MCF 10A (cell line): ENCODE measurements at regions of chr9 and their contacts with region 1.

Region 1: GRCh38 chr9:97710356-97711222 is 13.4 kb upstream of the XPA start:
- DNase-seq: peak; percentile 75
- H3K4me3 Mint-ChIP-seq: no peak overlapping the region
- H3K27ac Mint-ChIP-seq: no peak overlapping the region
- H3K4me1 Mint-ChIP-seq: peaks cover 24% of the 10 kb centered on the region
- H3K27me3 Mint-ChIP-seq: no peaks in the 10 kb centered on the region
- CTCF ChIP-seq: peak; percentile 82

Region 2: GRCh38 chr9:97575673-97576200 is 134.9 kb before region 1 on chr9:
- CTCF ChIA-PET with region 1: no interaction called
- POLR2A ChIA-PET with region 1: no interaction called
- intact Hi-C with region 1: no loop called
- DNase-seq: no peak
- H3K4me3 Mint-ChIP-seq: no peak overlapping the region
- H3K27ac Mint-ChIP-seq: no peak overlapping the region
- H3K4me1 Mint-ChIP-seq: no peaks in the 10 kb centered on the region
- H3K27me3 Mint-ChIP-seq: peaks cover 13% of the 10 kb centered on the region
- CTCF ChIP-seq: no peak

Region 3: DNA sequence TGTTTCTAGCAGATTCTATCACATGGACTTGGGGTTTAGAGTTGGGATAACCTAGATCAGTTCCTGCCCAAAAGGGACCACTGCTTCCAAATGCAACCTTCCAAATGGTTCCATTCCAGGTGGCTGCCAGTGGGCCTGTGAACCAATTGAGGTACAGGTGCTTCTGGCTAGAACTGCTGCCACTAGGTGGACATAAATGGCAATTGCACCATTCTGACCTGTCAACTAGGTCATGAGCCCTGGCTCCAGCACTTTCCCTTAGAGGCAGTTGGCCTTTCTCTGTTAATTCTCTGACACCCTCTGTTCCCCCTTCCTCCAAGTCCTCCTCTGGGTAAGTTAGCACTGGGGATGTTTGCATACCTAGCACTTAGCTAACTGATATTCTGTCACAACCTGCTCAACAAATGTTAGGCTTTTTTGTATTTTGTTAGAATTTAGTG is 244.0 kb after region 1 on chr9:
- CTCF ChIA-PET with region 1: interaction called, 3 read pairs
- POLR2A ChIA-PET with region 1: no interaction called
- intact Hi-C with region 1: loop called (anchors 1 kb)
- DNase-seq: peak; percentile 64
- H3K4me3 Mint-ChIP-seq: no peak overlapping the region
- H3K27ac Mint-ChIP-seq: no peak overlapping the region
- H3K4me1 Mint-ChIP-seq: no peaks in the 10 kb centered on the region
- H3K27me3 Mint-ChIP-seq: peaks cover 13% of the 10 kb centered on the region
- CTCF ChIP-seq: peak; percentile 69

Region 4: GRCh38 chr9:98410185-98410697 is 699.7 kb after region 1 on chr9:
- CTCF ChIA-PET with region 1: no interaction called
- POLR2A ChIA-PET with region 1: no interaction called
- intact Hi-C with region 1: no loop called
- DNase-seq: peak; percentile 14
- H3K4me3 Mint-ChIP-seq: no peak overlapping the region
- H3K27ac Mint-ChIP-seq: no peak overlapping the region
- H3K4me1 Mint-ChIP-seq: no peaks in the 10 kb centered on the region
- H3K27me3 Mint-ChIP-seq: peaks cover 23% of the 10 kb centered on the region
- CTCF ChIP-seq: no peak